HepG2 (cell line): ENCODE measurements at regions of chr2 and their contacts with region 1.

Region 1: DNA sequence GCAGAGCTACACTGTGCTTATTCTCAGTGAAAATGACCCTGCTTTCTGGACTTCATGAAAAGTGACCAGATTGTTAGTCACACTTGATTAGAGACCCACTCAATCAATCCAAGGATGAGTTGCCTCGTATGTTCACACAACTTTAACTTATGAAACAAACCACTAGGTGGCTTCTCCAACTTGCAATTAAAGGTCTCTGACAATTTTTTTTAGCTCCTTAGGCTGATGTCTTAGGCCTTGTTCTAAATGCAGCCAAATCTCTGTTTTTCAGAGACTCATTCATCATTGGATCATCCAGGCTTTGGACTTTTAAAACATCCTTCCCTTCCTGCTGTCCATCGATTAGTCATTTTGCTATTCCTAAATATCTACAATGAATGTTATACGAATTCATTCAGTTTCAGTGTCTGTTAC is 63.4 kb downstream of the MREG start:
- DNase-seq: peak; percentile 55
- ATAC-seq: peak; percentile 73
- H3K4me3 ChIP-seq: no peak overlapping the region
- H3K27ac ChIP-seq: no peak overlapping the region
- H3K4me1 ChIP-seq: peaks cover 24% of the 10 kb centered on the region
- H3K27me3 ChIP-seq: no peaks in the 10 kb centered on the region
- CTCF ChIP-seq: peak; percentile 59
- EP300 ChIP-seq: no peak
- POLR2A ChIP-seq: no peak
- RAD21 ChIP-seq: no peak; the same call in 1 of the 2 replicates

Region 2: GRCh38 chr2:216023055-216023648 is 73.2 kb after region 1 on chr2:
- CTCF ChIA-PET with region 1: interaction called, 41 read pairs
- POLR2A ChIA-PET with region 1: interaction called, 3 read pairs
- in situ Hi-C with region 1: no loop called
- intact Hi-C with region 1: loop called (anchors 1 kb)
- DNase-seq: peak; percentile 66
- ATAC-seq: peak; percentile 86
- H3K4me3 ChIP-seq: no peak overlapping the region
- H3K27ac ChIP-seq: no peak overlapping the region
- H3K4me1 ChIP-seq: peaks cover 20% of the 10 kb centered on the region
- H3K27me3 ChIP-seq: no peaks in the 10 kb centered on the region
- CTCF ChIP-seq: peak; percentile 73
- EP300 ChIP-seq: no peak
- POLR2A ChIP-seq: no peak
- RAD21 ChIP-seq: 0 out of 2 replicates have a peak, but pooled peaks have one; percentile 51

Region 3: GRCh38 chr2:216491793-216492596 is 542.0 kb after region 1 on chr2:
- CTCF ChIA-PET with region 1: no interaction called
- POLR2A ChIA-PET with region 1: no interaction called
- in situ Hi-C with region 1: no loop called
- intact Hi-C with region 1: no loop called
- DNase-seq: peak; percentile 66
- ATAC-seq: peak; percentile 92
- H3K4me3 ChIP-seq: no peak overlapping the region
- H3K27ac ChIP-seq: no peak overlapping the region
- H3K4me1 ChIP-seq: peaks cover 20% of the 10 kb centered on the region
- H3K27me3 ChIP-seq: no peaks in the 10 kb centered on the region
- CTCF ChIP-seq: no peak
- EP300 ChIP-seq: no peak
- POLR2A ChIP-seq: no peak
- RAD21 ChIP-seq: no peak